Mammary epithelial cell (primary cell): ENCODE measurements at regions of chr16 and their contacts with region 1.

Region 1: GRCh38 chr16:35398197-35398596 is 1938.8 kb downstream of the TP53TG3F start:
- DNase-seq: no peak
- H3K4me3 ChIP-seq: no peak overlapping the region
- H3K27ac ChIP-seq: no peak overlapping the region
- H3K4me1 ChIP-seq: no peaks in the 10 kb centered on the region
- H3K27me3 ChIP-seq: no peaks in the 10 kb centered on the region
- CTCF ChIP-seq: no peak

Region 2: DNA sequence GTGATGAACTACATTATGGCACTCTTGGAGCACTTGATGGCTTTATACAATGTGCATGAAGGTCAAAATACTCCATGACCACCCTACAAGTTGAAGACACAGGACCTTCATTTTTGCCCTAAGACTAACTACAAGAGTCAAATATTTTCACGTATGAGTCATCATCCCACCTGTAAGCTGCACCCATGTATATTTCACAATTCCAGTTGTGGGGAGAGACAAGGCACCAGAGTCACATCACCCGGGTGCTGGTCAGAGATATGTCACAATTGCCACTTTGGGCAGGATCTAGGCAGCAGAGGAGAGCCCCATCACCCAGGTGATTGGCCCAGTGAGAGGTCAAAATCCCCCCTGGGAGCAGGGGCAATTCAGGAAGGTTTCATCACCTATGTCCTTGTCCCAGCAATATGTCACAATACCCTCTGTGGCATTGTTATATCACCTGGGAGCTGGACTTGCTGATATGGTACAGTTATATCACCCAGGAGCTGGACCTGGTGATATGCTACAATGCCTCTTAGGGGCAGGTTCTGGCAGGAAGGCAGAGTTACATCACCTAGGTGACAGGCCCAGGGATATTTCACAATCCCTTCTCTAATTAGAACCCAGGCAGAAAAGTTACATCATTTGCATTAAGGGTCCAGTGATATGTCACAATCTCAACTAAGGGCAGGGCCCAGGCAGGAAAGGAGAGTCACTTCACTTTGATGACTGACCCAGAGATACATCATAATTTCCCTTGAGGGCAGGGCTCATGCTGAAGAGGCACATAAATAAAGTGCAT is 99.5 kb before region 1 on chr16:
- CTCF ChIA-PET with region 1: no interaction called
- dilution Hi-C with region 1: no loop called
- in situ Hi-C with region 1: no loop called
- intact Hi-C with region 1: no loop called
- DNase-seq: peak; percentile 38
- H3K4me3 ChIP-seq: no peak overlapping the region
- H3K27ac ChIP-seq: peak overlapping the region; percentile 63
- H3K4me1 ChIP-seq: peaks cover 27% of the 10 kb centered on the region
- H3K27me3 ChIP-seq: no peaks in the 10 kb centered on the region
- CTCF ChIP-seq: no peak

Region 3: GRCh38 chr16:35431829-35432663 is 33.8 kb after region 1 on chr16:
- CTCF ChIA-PET with region 1: no interaction called
- dilution Hi-C with region 1: no loop called
- in situ Hi-C with region 1: no loop called
- intact Hi-C with region 1: loop called (anchors 2 kb)
- DNase-seq: no peak
- H3K4me3 ChIP-seq: no peak overlapping the region
- H3K27ac ChIP-seq: no peak overlapping the region
- H3K4me1 ChIP-seq: no peaks in the 10 kb centered on the region
- H3K27me3 ChIP-seq: no peaks in the 10 kb centered on the region
- CTCF ChIP-seq: peak; percentile 53 to 75

Region 4: DNA sequence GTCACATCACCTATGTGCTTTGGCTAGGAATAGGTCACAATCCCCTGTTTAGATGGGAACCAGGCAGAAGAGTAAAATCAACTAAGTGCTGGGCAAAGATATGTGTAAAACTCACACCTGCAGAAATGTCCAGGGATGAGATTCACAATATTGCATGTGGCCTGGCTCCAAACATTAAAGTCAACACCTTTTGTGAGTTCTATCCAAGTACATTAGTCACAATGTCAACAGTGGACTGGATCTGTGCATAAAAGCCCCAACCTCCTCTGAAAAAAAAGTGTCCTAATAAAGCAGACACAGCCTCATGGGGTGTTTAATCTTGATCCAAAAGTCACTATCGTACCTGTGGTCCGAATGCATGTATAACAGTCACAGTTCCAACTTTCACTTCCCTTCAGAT is 51.5 kb after region 1 on chr16:
- CTCF ChIA-PET with region 1: no interaction called
- dilution Hi-C with region 1: no loop called
- in situ Hi-C with region 1: no loop called
- intact Hi-C with region 1: no loop called
- DNase-seq: no peak
- H3K4me3 ChIP-seq: no peak overlapping the region
- H3K27ac ChIP-seq: no peak overlapping the region
- H3K4me1 ChIP-seq: no peaks in the 10 kb centered on the region
- H3K27me3 ChIP-seq: no peaks in the 10 kb centered on the region
- CTCF ChIP-seq: no peak